Body of pancreas (tissue), 4 donors: ENCODE measurements at regions of chr21 and their contacts with region 1.

Region 1: DNA sequence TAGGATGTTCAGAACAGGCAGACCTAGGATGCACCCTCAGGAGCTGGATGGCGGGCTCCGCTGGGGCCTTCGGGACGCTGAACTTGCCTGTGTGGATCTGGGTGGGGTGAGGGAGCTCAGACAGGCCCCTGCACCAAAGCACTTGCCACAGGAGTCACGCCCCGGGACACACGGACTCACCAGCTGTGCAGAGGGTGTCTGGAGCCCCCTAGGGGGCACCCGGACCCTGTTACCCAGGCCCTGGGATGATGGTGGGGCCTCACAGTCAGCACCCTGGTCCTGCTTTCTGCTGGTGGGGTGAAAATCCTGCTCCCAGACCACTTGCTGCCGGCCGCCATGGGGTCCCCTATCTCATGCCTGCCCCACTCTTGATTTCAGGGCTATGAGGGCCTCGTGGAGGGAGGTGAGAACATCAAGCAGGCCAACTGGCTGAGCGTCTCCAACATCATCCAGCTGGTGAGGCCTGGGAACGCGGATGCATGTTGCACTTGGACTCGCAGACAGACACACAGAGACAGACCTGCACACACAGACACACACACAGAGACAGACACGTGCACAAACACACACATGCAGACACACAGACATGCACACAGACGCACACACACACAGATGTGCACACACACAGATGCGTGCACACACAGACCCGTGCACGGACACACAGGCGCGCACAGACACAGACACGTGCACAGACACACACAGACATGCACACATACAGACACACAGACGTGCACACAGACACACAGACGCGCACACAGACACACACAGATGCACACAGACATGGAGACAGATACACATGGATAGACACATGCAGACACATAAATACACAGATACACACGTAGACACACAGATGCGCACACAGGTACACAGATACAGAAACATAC is 11.0 kb downstream of the PFKL start:
- DNase-seq: no peak
- ATAC-seq: no peak
- H3K4me3 ChIP-seq: no peak overlapping the region
- H3K27ac ChIP-seq: no peak overlapping the region
- H3K4me1 ChIP-seq: no peaks in the 10 kb centered on the region
- H3K27me3 ChIP-seq: no peaks in the 10 kb centered on the region
- CTCF ChIP-seq: no peak
- POLR2A ChIP-seq: no peak

Region 2: DNA sequence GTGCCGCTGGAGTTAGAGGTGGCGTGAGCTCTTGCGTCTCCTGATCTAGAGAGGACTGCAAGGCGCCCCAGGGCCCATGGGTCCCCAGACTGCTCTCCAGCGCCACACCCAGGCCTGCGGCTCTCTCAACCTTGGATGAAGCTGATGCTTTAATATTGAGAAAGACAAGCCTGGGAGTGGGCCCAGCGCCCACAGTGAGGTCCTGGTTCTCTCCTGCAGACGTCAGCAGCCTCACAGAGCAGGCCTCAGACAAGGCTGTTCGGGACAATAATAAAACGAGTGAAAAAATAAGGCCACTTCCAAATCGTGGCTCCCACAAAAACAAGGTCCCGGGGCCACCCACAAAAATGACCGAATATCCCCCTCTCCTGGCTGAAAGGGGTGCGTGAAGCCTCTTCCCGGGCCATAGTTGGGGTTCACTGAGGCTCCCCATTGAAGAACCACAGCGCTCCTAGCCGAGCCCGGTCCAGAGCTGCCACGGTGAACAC is 43.2 kb before region 1 on chr21:
- intact Hi-C with region 1: loop called (anchors 10 kb)
- DNase-seq: peak in 2 of 4 donors; percentile 9 to 17
- ATAC-seq: no peak
- H3K4me3 ChIP-seq: no peak overlapping the region
- H3K27ac ChIP-seq: no peak overlapping the region
- H3K4me1 ChIP-seq: no peaks in the 10 kb centered on the region
- H3K27me3 ChIP-seq: no peaks in the 10 kb centered on the region
- CTCF ChIP-seq: peak in 2 of 7 experiments; percentile 2 to 12
- POLR2A ChIP-seq: no peak